ENCODE measurements at regions of chr6 and their contacts with region 1.

Region 1: DNA sequence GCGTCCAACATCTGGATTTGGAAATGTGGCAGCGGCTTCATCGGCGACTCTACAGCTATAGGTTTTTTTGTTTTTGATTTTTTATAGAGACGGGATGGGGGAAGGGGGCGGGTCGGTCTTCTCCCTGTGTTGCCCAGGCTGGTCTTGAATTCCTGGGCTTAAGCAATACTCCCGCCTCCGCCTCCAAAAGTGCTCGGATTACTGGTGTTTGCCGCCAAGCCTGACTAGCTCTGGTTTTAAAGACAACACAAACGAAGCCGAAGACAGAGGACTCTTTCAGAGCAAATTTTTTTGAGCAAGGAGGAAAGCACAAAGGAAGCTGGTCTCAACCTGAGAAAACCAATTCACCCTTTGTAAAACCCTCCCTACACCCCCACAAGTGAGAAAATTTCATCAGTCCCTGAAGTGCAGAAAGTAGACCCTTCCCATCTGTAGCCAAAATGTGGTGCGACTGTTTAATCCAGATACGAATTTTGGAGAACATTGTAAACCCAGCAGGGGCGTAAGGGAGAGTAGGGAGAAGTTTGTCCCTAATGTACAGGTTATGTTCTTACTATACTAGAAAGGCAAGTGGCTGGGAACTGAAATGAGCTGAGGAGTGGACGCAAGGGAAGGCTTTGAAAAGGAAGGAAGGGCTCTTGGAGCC is 185.9 kb downstream of the TRIM27 start:
- DNase-seq: no peak
- H3K4me3 Mint-ChIP-seq: no peak overlapping the region
- H3K27ac Mint-ChIP-seq: no peak overlapping the region
- H3K4me1 Mint-ChIP-seq: peaks cover 2% of the 10 kb centered on the region
- H3K27me3 Mint-ChIP-seq: peaks cover 68% of the 10 kb centered on the region

Region 2: GRCh38 chr6:28776269-28777146 is 38.6 kb after region 1 on chr6:
- CTCF ChIA-PET with region 1: no interaction called
- POLR2A ChIA-PET with region 1: no interaction called
- intact Hi-C with region 1: loop called (anchors 5 kb)
- DNase-seq: no peak
- H3K4me3 Mint-ChIP-seq: no peak overlapping the region
- H3K27ac Mint-ChIP-seq: no peak overlapping the region
- H3K4me1 Mint-ChIP-seq: peaks cover 10% of the 10 kb centered on the region
- H3K27me3 Mint-ChIP-seq: peaks cover 86% of the 10 kb centered on the region

Region 3: GRCh38 chr6:28809947-28810658 is 72.2 kb after region 1 on chr6:
- CTCF ChIA-PET with region 1: no interaction called
- POLR2A ChIA-PET with region 1: no interaction called
- intact Hi-C with region 1: loop called (anchors 5 kb)
- DNase-seq: no peak
- H3K4me3 Mint-ChIP-seq: peak overlapping the region; percentile 31
- H3K27ac Mint-ChIP-seq: no peak overlapping the region
- H3K4me1 Mint-ChIP-seq: peaks cover 10% of the 10 kb centered on the region
- H3K27me3 Mint-ChIP-seq: peaks cover 81% of the 10 kb centered on the region